GM13977 (cell line): ENCODE measurements at regions of chr12 and their contacts with region 1.

Region 1: DNA sequence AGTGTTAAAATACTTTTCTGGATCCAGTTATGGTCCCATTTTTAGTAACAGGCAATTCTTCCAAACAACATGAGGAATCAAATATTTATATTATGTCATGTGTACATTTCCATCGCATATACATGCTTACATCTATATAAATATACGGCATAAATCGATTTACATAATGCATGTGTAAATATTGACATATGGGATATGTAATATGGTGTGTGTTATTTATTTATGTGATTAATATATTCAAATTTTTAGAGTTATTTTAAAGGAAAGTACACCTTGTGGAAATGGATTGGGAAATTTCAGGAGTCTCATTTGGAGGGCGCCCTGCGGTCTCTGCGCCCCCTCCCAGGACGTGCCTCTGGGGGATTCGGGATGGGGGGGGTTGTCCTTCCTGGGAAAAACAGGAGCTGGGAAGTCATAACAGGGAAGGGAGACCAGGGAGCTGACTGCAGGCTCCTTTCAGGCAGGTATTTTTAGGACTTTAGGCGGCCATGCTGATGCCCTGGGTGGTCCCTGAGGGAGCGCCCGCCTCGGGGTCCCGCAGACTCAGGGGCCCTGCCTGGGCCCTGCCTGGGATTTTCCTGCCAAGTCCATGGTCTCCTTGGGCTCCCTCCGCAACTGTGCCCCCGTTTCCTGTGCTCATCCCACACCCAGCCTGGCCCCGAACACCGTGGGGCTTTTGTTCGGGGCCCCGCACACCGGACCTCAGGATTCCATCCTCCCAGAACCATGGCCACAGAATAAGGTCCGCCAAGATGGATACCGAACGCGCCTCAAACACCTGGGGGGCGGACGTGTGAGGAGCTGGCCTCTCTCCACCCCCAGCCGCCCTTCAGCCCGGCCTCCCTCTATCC is 82.6 kb upstream of the SFSWAP start:
- DNase-seq: no peak
- CTCF ChIP-seq: no peak

Region 2: DNA sequence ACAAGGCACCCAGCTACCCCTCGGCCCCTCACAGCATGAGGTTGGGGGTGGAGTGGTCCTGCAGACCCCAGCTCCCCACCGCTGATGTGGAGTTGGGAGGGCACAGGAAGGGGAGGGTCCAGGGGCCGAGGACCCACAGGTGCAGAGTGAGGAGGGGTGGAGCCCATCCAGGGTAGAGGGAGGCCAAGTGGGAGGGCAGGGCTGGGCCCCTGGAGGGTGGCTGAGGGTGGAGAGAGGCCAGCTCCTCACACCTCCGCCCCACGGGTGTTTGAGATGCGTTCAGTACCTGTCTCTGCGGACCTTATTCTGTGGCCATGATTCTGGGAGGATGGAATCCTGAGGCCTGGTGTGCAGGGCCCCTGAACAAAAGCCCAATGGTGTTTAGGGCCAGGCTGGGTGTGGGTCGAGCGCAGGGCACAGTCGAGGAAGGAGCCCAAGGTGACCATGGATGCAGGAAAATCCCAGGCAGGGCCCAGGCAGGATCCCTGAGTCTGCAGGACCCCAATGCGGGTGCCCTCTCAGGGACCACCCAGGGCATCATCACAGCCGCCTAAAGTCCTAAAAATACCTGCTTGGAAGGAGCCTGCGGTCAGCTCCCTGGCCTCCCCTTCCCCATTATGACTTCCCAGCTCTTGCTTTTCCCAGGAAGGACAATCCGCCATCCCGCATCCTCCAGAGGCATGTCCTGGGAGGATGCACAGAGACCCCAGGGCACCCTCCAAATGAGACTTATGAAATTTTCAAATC is 294.5 kb before region 1 on chr12:
- in situ Hi-C with region 1: loop called (anchors 5 kb)
- DNase-seq: no peak
- CTCF ChIP-seq: no peak